CD8-positive, alpha-beta T cell (primary cell): ENCODE measurements at regions of chr12 and their contacts with region 1.

Region 1: DNA sequence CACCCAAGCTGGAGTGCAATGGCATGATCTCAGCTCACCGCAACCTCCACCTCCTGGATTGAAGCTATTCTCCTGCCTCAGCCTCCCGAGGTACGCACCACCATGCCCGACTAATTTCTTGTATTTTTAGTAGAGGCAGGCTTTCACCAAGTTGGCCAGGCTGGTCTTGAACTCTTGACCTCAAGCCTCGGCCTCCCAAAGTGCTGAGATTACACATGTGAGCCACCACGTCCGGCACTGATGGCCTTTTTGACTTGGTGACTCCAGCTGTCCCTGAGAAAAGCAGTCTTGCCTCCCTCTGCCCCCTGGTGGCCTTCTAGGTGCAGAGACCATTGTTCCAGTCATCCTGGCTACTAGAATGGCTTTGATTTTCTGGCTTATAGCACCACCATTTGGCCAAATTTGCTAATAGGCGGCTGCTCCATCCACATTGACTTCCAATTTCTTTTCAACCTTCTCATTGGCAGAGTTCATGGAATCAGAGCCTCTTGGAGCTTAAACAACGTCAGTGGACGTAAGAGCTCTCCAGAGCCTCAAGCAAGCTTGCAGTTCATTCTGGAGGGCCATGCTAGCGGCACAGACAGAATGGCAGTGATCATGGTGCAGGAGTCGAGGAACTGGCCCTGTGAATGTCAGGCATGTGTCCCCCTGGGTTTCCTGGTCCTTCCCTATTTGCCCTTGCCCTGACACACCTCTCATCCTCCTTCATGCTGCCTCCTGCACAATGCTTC is 25.4 kb upstream of the EIF4B start:
- DNase-seq: peak; percentile 63 to 90 (median 83)
- ATAC-seq: peak; percentile 94
- H3K4me3 ChIP-seq: no peak overlapping the region
- H3K4me3 Mint-ChIP-seq: no peak overlapping the region
- H3K27ac ChIP-seq: no peak overlapping the region
- H3K27ac Mint-ChIP-seq: no peak overlapping the region
- H3K4me1 ChIP-seq: no peaks in the 10 kb centered on the region
- H3K4me1 Mint-ChIP-seq: no peaks in the 10 kb centered on the region
- H3K27me3 ChIP-seq: peaks cover 0 to 4% of the 10 kb centered on the region in 2 experiments
- H3K27me3 Mint-ChIP-seq: peaks cover 45% of the 10 kb centered on the region
- CTCF ChIP-seq: peak; percentile 92

Region 2: DNA sequence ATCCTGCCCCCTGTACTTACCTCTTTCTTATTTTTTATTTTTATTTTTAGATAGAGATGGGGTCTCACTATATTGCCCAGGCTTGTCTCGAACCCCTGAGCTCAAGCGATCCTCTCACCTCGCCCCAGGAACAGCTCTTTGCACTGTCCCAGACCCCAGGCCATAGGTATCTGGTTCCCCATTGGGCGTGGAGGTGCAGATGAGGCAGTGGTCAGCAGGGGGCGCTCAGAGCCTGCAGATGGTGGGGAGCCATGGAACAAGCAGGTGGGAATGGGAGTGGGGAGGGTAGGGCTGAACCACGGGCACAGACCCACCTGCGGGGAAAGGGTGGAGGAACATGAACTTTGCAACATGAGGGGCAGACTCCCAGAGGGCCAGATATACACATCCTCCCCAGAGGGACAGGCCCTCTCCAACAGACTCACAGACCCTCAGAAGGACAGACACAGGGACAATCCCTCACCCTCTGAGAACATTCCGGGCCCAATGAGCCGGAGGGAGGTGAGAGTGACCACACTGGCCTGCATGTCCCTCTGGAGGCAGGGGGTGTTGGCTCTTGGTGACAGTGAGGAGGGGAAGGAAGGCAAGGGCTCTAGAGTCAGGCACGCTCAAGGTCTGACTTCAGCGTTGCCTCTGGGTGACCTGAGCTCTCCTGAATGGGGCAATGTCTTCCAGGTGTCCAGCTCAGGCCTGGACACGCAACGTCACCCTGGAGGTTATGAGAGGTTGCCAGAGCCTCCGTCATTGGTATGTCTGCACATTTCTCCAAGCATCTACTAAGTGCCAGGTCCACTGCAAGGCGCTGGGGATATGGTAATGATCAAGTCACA is 823.9 kb before region 1 on chr12:
- CTCF ChIA-PET with region 1: interaction called, 5 read pairs
- POLR2A ChIA-PET with region 1: no interaction called
- intact Hi-C with region 1: loop called (anchors 1 to 2 kb)
- DNase-seq: peak; percentile 53 to 77 (median 73)
- ATAC-seq: peak; percentile 35
- H3K4me3 ChIP-seq: no peak overlapping the region
- H3K4me3 Mint-ChIP-seq: no peak overlapping the region
- H3K27ac ChIP-seq: no peak overlapping the region
- H3K27ac Mint-ChIP-seq: no peak overlapping the region
- H3K4me1 ChIP-seq: peaks cover 33% of the 10 kb centered on the region
- H3K4me1 Mint-ChIP-seq: peaks cover 22% of the 10 kb centered on the region
- H3K27me3 ChIP-seq: no peaks in the 10 kb centered on the region
- H3K27me3 Mint-ChIP-seq: no peaks in the 10 kb centered on the region
- CTCF ChIP-seq: peak; percentile 66

Region 3: GRCh38 chr12:52573306-52573705 is 407.6 kb before region 1 on chr12:
- CTCF ChIA-PET with region 1: interaction called, 13 read pairs
- POLR2A ChIA-PET with region 1: no interaction called
- intact Hi-C with region 1: no loop called
- DNase-seq: no peak
- ATAC-seq: no peak
- H3K4me3 ChIP-seq: no peak overlapping the region
- H3K4me3 Mint-ChIP-seq: no peak overlapping the region
- H3K27ac ChIP-seq: no peak overlapping the region
- H3K27ac Mint-ChIP-seq: no peak overlapping the region
- H3K4me1 ChIP-seq: peaks cover 6% of the 10 kb centered on the region
- H3K4me1 Mint-ChIP-seq: peaks cover 3% of the 10 kb centered on the region
- H3K27me3 ChIP-seq: no peaks in the 10 kb centered on the region
- H3K27me3 Mint-ChIP-seq: peaks cover 11% of the 10 kb centered on the region
- CTCF ChIP-seq: no peak

Region 4: GRCh38 chr12:52870351-52871290 is 110.2 kb before region 1 on chr12:
- CTCF ChIA-PET with region 1: interaction called, 524 read pairs
- POLR2A ChIA-PET with region 1: no interaction called
- intact Hi-C with region 1: no loop called
- DNase-seq: peak; percentile 71 to 92 (median 81)
- ATAC-seq: peak; percentile 71
- H3K4me3 ChIP-seq: no peak overlapping the region
- H3K4me3 Mint-ChIP-seq: no peak overlapping the region
- H3K27ac ChIP-seq: peak overlapping the region; percentile 28 to 64
- H3K27ac Mint-ChIP-seq: peak overlapping the region; percentile 41
- H3K4me1 ChIP-seq: peaks cover 33% of the 10 kb centered on the region
- H3K4me1 Mint-ChIP-seq: peaks cover 33% of the 10 kb centered on the region
- H3K27me3 ChIP-seq: no peaks in the 10 kb centered on the region
- H3K27me3 Mint-ChIP-seq: no peaks in the 10 kb centered on the region
- CTCF ChIP-seq: peak; percentile 84

Region 5: DNA sequence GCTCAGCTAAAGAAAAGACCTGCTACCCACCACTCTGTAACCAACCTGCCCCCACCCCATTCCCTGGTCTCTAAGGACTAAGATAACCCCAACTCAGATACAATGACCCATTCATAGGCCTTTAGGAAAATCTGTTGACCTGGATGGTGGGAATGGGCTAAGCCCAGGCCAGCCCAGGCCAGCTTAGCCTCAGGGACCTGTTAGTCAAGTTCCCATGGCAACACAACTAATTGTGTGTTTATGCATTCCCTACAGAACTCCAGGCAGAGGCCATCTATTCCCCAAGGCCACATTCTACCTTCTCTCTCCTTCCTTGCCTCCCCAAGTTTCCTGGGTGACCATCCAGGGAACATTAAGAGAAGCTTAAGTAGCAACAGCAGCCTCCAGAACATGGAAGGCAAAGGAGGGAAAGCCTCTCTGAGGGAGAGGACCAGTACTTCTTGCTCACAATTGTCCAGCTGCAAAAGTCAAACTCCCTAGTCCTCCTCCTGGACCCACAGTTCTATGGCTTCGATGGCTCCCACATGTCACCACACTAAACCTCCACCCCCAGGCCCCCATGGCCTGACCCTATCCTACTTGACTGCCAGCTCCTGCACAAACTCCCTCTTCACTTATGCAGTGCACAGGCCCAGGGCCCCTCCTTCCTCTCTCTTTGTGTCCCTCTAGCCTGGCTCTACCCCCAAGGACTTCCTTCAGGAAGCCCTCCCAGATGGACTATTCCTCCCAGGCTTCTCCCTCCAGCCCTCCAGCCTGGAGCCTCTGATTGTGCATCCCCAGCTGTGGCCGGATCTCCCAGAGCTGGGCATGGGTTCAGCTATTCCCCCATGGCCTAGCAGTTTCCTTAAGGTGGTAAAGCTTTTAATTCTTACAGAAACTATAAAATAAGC is 59.7 kb before region 1 on chr12:
- CTCF ChIA-PET with region 1: interaction called, 10 read pairs
- POLR2A ChIA-PET with region 1: no interaction called
- intact Hi-C with region 1: no loop called
- DNase-seq: no peak
- ATAC-seq: no peak
- H3K4me3 ChIP-seq: no peak overlapping the region
- H3K4me3 Mint-ChIP-seq: no peak overlapping the region
- H3K27ac ChIP-seq: no peak overlapping the region
- H3K27ac Mint-ChIP-seq: no peak overlapping the region
- H3K4me1 ChIP-seq: no peaks in the 10 kb centered on the region
- H3K4me1 Mint-ChIP-seq: no peaks in the 10 kb centered on the region
- H3K27me3 ChIP-seq: peaks cover 0 to 2% of the 10 kb centered on the region in 2 experiments
- H3K27me3 Mint-ChIP-seq: no peaks in the 10 kb centered on the region
- CTCF ChIP-seq: no peak

Region 6: DNA sequence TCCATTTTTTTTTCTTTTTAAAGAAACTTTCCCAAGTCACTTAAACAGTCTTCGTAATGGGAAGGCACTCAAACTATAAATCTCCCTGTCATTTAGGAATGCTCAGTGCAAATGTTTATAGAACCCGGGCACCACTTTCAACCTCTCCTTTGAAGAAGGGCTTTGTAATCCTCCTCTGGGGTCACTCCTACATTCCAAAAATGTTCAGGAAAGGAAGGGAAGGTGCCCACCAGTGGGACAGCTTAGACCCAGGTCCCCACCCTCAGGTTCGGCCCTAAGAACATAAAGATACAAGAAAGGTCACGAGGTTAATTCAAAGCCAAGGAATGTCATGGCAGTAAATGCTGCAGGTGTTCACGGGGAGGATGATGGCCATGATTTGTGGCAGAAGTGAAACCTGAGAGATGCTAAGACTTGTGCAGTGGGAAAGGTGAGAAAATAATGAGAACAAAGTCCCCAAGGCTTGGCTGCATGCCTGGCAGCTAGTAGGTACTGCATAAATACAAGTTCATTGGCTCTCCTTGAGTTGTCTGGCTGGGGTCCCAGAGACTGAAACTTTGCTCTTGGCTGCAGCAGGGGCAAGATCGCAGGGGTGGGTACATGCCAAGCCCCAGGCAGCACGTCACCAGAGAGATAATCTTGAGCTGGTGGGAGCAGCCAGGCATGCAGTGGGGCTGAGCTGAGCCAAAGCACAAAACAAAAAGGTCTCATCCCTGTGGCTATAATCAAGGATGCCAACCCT is 10.9 kb before region 1 on chr12:
- CTCF ChIA-PET with region 1: interaction called, 37 read pairs
- POLR2A ChIA-PET with region 1: no interaction called
- intact Hi-C with region 1: no loop called
- DNase-seq: no peak
- ATAC-seq: no peak
- H3K4me3 ChIP-seq: no peak overlapping the region
- H3K4me3 Mint-ChIP-seq: no peak overlapping the region
- H3K27ac ChIP-seq: no peak overlapping the region
- H3K27ac Mint-ChIP-seq: no peak overlapping the region
- H3K4me1 ChIP-seq: no peaks in the 10 kb centered on the region
- H3K4me1 Mint-ChIP-seq: no peaks in the 10 kb centered on the region
- H3K27me3 ChIP-seq: peaks cover 0 to 3% of the 10 kb centered on the region in 2 experiments
- H3K27me3 Mint-ChIP-seq: peaks cover 12% of the 10 kb centered on the region
- CTCF ChIP-seq: no peak